ENCODE measurements at regions of chr6 and their contacts with region 1.

Region 1: GRCh38 chr6:168035098-168035660 is 37.7 kb downstream of the KIF25 start:
- DNase-seq: peak; percentile 78
- ATAC-seq: peak; percentile 62
- H3K4me3 ChIP-seq: peak overlapping the region; percentile 58
- H3K27ac ChIP-seq: peak overlapping the region; percentile 50
- H3K4me1 ChIP-seq: peaks cover 15% of the 10 kb centered on the region
- H3K27me3 ChIP-seq: no peaks in the 10 kb centered on the region
- CTCF ChIP-seq: no peak
- POLR2A ChIP-seq: 0 out of 2 replicates have a peak, but pooled peaks have one; percentile 22
- RAD21 ChIP-seq: no peak

Region 2: DNA sequence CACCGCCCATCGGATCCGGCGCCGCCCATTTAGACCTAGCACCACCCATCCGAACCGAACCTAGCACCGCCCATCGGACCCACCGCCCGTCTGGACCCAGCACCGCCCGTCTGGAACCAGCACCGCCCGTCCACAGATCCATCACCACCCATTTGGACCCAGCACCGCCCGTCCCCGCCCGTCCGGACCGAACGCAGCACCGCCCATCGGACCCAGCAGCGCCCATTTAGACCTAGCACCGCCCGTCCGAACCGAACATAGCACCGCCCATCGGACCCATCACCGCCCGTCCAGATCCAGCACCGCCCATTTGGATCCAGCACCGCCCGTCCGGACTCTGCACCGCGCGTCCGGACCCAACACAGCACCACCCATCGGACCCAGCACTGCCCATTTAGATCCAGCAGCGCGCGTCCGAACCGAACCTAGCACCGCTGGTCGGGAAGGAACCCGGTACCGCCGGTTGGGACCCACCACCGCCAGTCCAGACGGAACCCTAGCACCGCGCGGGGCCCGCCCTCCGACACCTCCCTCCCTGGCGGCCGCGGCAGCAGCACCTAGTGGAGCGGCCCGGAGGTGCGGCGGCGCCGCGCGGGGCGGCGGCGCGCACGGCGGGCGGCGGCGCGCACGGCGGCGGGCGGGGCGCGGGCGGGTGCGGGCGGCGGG is 208.8 kb before region 1 on chr6:
- CTCF ChIA-PET with region 1: no interaction called
- POLR2A ChIA-PET with region 1: no interaction called
- dilution Hi-C with region 1: no loop called
- in situ Hi-C with region 1: no loop called
- intact Hi-C with region 1: loop called (anchors 10 kb)
- DNase-seq: peak; percentile 21
- ATAC-seq: peak; percentile 87
- H3K4me3 ChIP-seq: peak overlapping the region; percentile 100
- H3K27ac ChIP-seq: no peak overlapping the region; the same call in 1 of the 2 replicates
- H3K4me1 ChIP-seq: peaks cover 2% of the 10 kb centered on the region; the same call in 1 of the 2 replicates
- H3K27me3 ChIP-seq: no peaks in the 10 kb centered on the region; the same call in 1 of the 2 replicates
- CTCF ChIP-seq: peak; percentile 40
- POLR2A ChIP-seq: no peak
- RAD21 ChIP-seq: no peak; the same call in 1 of the 2 replicates

Region 3: GRCh38 chr6:167888098-167888497 is 147.1 kb before region 1 on chr6:
- CTCF ChIA-PET with region 1: no interaction called
- POLR2A ChIA-PET with region 1: no interaction called
- dilution Hi-C with region 1: no loop called
- in situ Hi-C with region 1: no loop called
- intact Hi-C with region 1: no loop called
- DNase-seq: no peak
- ATAC-seq: no peak
- H3K4me3 ChIP-seq: no peak overlapping the region
- H3K27ac ChIP-seq: no peak overlapping the region
- H3K4me1 ChIP-seq: no peaks in the 10 kb centered on the region
- H3K27me3 ChIP-seq: no peaks in the 10 kb centered on the region
- CTCF ChIP-seq: no peak
- POLR2A ChIP-seq: no peak
- RAD21 ChIP-seq: no peak

Region 4: DNA sequence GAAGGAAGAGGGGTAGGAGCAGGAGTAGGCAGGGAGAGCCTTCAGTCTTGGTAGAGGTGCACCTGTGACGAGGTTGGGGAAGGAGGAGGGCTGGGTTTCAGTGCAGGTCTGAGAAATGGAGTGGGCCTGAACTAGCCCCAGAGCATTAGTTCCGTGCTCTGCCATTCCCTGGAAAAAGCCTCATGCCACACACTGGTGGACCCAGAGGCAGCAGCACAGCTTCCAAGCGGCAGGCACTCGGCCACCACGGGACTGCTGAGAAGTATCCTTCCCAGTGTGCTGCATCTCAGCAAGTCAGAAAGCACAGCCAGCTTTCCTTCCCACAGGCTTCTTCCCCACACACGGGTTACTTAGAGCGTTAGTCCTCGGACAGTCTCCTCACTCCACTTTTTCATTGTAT is 115.0 kb before region 1 on chr6:
- CTCF ChIA-PET with region 1: no interaction called
- POLR2A ChIA-PET with region 1: no interaction called
- dilution Hi-C with region 1: no loop called
- in situ Hi-C with region 1: no loop called
- intact Hi-C with region 1: no loop called
- DNase-seq: no peak
- ATAC-seq: no peak
- H3K4me3 ChIP-seq: no peak overlapping the region
- H3K27ac ChIP-seq: no peak overlapping the region
- H3K4me1 ChIP-seq: no peaks in the 10 kb centered on the region
- H3K27me3 ChIP-seq: no peaks in the 10 kb centered on the region
- CTCF ChIP-seq: no peak
- POLR2A ChIP-seq: no peak
- RAD21 ChIP-seq: no peak

Region 5: GRCh38 chr6:167956983-167957492 is 78.1 kb before region 1 on chr6:
- CTCF ChIA-PET with region 1: no interaction called
- POLR2A ChIA-PET with region 1: no interaction called
- dilution Hi-C with region 1: no loop called
- in situ Hi-C with region 1: no loop called
- intact Hi-C with region 1: loop called (anchors 10 kb)
- DNase-seq: peak; percentile 17
- ATAC-seq: peak; percentile 65; the same call in 1 of the 2 replicates
- H3K4me3 ChIP-seq: no peak overlapping the region
- H3K27ac ChIP-seq: no peak overlapping the region
- H3K4me1 ChIP-seq: peaks cover 3% of the 10 kb centered on the region; the same call in 1 of the 2 replicates
- H3K27me3 ChIP-seq: no peaks in the 10 kb centered on the region
- CTCF ChIP-seq: no peak
- POLR2A ChIP-seq: no peak
- RAD21 ChIP-seq: no peak

Region 6: GRCh38 chr6:168428052-168428826 is 393.1 kb after region 1 on chr6:
- CTCF ChIA-PET with region 1: no interaction called
- POLR2A ChIA-PET with region 1: no interaction called
- dilution Hi-C with region 1: no loop called
- in situ Hi-C with region 1: no loop called
- intact Hi-C with region 1: no loop called
- DNase-seq: no peak
- ATAC-seq: no peak
- H3K4me3 ChIP-seq: no peak overlapping the region
- H3K27ac ChIP-seq: no peak overlapping the region
- H3K4me1 ChIP-seq: no peaks in the 10 kb centered on the region
- H3K27me3 ChIP-seq: no peaks in the 10 kb centered on the region
- CTCF ChIP-seq: no peak
- POLR2A ChIP-seq: no peak
- RAD21 ChIP-seq: no peak

Measured in IMR-90 (cell line).